Calu3 (cell line): ENCODE measurements at regions of chr16 and their contacts with region 1.

Region 1: DNA sequence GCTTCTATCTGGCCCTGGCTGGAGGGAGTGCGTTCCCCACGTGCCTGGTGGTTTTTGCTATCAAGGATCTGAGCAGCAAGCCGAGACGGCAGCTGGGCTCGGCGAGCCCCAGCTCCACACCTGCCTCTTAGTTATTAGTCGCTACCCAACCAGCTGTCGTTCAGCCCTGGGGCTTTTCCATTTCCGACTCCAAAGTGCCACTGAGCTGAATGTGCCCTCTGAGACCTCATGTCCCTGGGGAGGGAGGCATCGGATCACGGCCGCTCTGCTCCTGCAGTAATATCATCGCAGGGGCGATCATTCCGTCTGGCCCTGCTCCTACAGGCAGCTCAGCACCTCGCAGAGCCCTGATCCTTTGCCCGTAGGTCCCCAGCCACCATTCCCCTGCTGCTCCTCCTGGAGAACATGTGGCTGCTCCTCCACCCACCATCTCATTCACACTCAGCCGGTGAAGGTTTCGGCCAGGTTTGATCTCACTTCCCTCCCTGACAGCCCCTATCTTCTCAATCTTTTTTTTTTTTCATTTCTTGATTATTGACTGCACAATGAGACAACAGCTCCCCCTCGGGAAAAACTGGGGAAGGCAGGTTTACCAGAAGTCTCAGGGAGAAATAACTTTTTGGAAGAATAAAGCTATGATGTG is 86.7 kb downstream of the ZFHX3 start:
- DNase-seq: peak; percentile 43
- H3K4me3 Mint-ChIP-seq: peak overlapping the region; percentile 21
- H3K27ac Mint-ChIP-seq: no peak overlapping the region
- H3K4me1 Mint-ChIP-seq: peaks cover 27% of the 10 kb centered on the region
- H3K27me3 Mint-ChIP-seq: no peaks in the 10 kb centered on the region
- CTCF ChIP-seq: peak; percentile 64

Region 2: GRCh38 chr16:72664509-72665225 is 296.6 kb before region 1 on chr16:
- CTCF ChIA-PET with region 1: no interaction called
- intact Hi-C with region 1: loop called (anchors 10 kb)
- DNase-seq: peak; percentile 97
- H3K4me3 Mint-ChIP-seq: peak overlapping the region; percentile 99
- H3K27ac Mint-ChIP-seq: peak overlapping the region; percentile 97
- H3K4me1 Mint-ChIP-seq: peaks cover 10% of the 10 kb centered on the region
- H3K27me3 Mint-ChIP-seq: no peaks in the 10 kb centered on the region
- CTCF ChIP-seq: no peak

Region 3: GRCh38 chr16:72689851-72690250 is 271.4 kb before region 1 on chr16:
- CTCF ChIA-PET with region 1: no interaction called
- intact Hi-C with region 1: no loop called
- DNase-seq: no peak
- H3K4me3 Mint-ChIP-seq: no peak overlapping the region
- H3K27ac Mint-ChIP-seq: no peak overlapping the region
- H3K4me1 Mint-ChIP-seq: no peaks in the 10 kb centered on the region
- H3K27me3 Mint-ChIP-seq: no peaks in the 10 kb centered on the region
- CTCF ChIP-seq: no peak

Region 4: GRCh38 chr16:73202161-73202729 is 241.0 kb after region 1 on chr16:
- CTCF ChIA-PET with region 1: no interaction called
- intact Hi-C with region 1: loop called (anchors 10 kb)
- DNase-seq: no peak
- H3K4me3 Mint-ChIP-seq: no peak overlapping the region
- H3K27ac Mint-ChIP-seq: no peak overlapping the region
- H3K4me1 Mint-ChIP-seq: peaks cover 31% of the 10 kb centered on the region
- H3K27me3 Mint-ChIP-seq: no peaks in the 10 kb centered on the region
- CTCF ChIP-seq: no peak